GM12878 (cell line): ENCODE measurements at regions of chr1 and their contacts with region 1.

Region 1: GRCh38 chr1:119318466-119319309 is 49.9 kb upstream of the HAO2 start:
- DNase-seq: peak; percentile 82
- ATAC-seq: peak; percentile 84
- H3K4me3 ChIP-seq: peak overlapping the region; percentile 59
- H3K27ac ChIP-seq: peak overlapping the region; percentile 76
- H3K4me1 ChIP-seq: peaks cover 22% of the 10 kb centered on the region
- H3K27me3 ChIP-seq: no peaks in the 10 kb centered on the region
- CTCF ChIP-seq: peak in 1 of 3 experiments; percentile 3; a peak in 1 of 6 replicates
- EP300 ChIP-seq: peak in 1 of 2 experiments; percentile 66; a peak in 1 of 4 replicates
- POLR2A ChIP-seq: no peak
- RAD21 ChIP-seq: peak; percentile 4; the same call in 1 of the 2 replicates

Region 2: DNA sequence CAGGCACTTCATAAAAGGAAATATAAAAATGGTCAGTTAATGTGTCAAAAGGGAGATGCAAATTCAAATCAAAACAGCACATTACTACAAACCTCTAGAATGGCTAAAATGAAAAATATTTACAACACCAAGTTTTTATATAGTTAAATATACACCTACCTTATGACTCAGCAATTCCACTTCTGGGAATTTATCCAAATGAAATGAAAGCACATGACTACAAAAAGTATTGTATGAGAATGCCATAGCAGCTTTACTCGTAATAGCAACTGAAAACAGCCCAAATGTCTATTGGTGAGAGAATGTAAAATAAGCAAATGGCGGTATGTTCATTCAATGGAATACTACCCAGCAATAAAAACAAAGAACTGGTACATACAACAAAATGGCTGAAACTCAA is 957.9 kb before region 1 on chr1:
- CTCF ChIA-PET with region 1: no interaction called
- POLR2A ChIA-PET with region 1: no interaction called
- RAD21 ChIA-PET with region 1: no interaction called
- SMC1A ChIA-PET with region 1: no interaction called
- in situ Hi-C with region 1: no loop called
- intact Hi-C with region 1: no loop called
- DNase-seq: no peak
- ATAC-seq: no peak
- H3K4me3 ChIP-seq: no peak overlapping the region
- H3K27ac ChIP-seq: no peak overlapping the region
- H3K4me1 ChIP-seq: no peaks in the 10 kb centered on the region
- H3K27me3 ChIP-seq: no peaks in the 10 kb centered on the region
- CTCF ChIP-seq: no peak
- EP300 ChIP-seq: no peak
- POLR2A ChIP-seq: no peak
- RAD21 ChIP-seq: no peak

Region 3: GRCh38 chr1:119266386-119266785 is 52.3 kb before region 1 on chr1:
- CTCF ChIA-PET with region 1: interaction called, 4 read pairs
- POLR2A ChIA-PET with region 1: no interaction called
- RAD21 ChIA-PET with region 1: interaction called, 3 read pairs
- SMC1A ChIA-PET with region 1: interaction called, 3 read pairs
- in situ Hi-C with region 1: no loop called
- intact Hi-C with region 1: loop called (anchors 5 kb)
- DNase-seq: peak; percentile 70
- ATAC-seq: peak; percentile 95
- H3K4me3 ChIP-seq: no peak overlapping the region
- H3K27ac ChIP-seq: 0 out of 2 replicates have a peak overlapping the region, but pooled peaks have one; percentile 24
- H3K4me1 ChIP-seq: peaks cover 14% of the 10 kb centered on the region
- H3K27me3 ChIP-seq: no peaks in the 10 kb centered on the region
- CTCF ChIP-seq: no peak
- EP300 ChIP-seq: no peak
- POLR2A ChIP-seq: no peak
- RAD21 ChIP-seq: no peak

Region 4: DNA sequence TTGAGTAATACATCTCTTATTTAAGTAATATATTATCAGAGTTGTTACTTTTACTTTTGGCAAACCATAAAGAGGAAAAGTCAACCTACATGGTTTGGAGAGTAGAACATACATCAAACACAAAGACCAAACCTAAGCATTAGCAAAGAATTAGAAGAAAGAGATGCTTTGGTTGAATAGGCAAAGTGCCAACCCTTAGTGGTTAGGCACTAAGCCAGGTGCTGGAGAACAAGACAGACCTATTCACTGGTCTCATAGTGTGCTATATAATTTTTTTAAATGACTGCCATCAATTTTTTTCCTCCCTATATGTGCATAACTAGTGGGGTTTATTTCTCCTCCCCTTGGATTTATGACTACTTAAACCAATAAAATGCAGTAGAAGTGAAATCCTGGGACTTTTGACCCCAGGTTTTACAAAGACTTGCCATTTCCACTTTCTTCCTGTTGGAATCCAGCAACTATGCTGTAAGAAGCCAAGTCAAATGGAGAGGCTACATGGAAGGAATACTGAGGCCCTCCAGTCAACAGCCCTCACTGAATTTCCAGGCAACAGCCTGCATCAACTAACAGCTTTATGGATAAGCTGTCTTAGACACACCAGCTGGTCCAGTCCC is 19.9 kb before region 1 on chr1:
- CTCF ChIA-PET with region 1: interaction called, 11 read pairs
- POLR2A ChIA-PET with region 1: interaction called, 5 read pairs
- RAD21 ChIA-PET with region 1: interaction called, 18 read pairs
- SMC1A ChIA-PET with region 1: interaction called, 43 read pairs
- in situ Hi-C with region 1: no loop called
- intact Hi-C with region 1: no loop called
- DNase-seq: no peak
- ATAC-seq: peak; percentile 41
- H3K4me3 ChIP-seq: no peak overlapping the region
- H3K27ac ChIP-seq: no peak overlapping the region
- H3K4me1 ChIP-seq: no peaks in the 10 kb centered on the region
- H3K27me3 ChIP-seq: peaks cover 0 to 3% of the 10 kb centered on the region in 2 experiments; a peak in 1 of 4 replicates
- CTCF ChIP-seq: no peak
- EP300 ChIP-seq: no peak
- POLR2A ChIP-seq: no peak
- RAD21 ChIP-seq: no peak

Region 5: DNA sequence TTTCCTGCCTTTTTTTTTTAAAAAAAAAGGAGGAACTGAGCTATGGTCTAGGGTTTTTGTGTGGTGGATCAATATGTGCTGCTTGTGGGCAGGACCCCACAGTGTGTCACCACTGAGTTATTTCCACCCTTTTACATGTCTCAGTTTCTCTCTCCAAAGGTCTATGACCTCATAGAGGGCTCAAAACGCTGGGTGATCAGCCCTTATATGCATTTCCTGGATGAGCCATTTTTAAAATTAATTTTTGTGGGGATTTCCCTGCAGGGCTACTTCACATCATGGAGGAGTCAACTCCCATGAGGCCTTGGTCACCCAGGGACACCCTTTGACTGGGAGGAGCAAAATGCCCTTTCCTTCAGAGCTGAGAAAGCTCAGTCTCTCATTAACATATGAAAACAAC is 29.2 kb after region 1 on chr1:
- CTCF ChIA-PET with region 1: interaction called, 47 read pairs
- POLR2A ChIA-PET with region 1: interaction called, 7 read pairs
- RAD21 ChIA-PET with region 1: interaction called, 48 read pairs
- SMC1A ChIA-PET with region 1: interaction called, 108 read pairs
- in situ Hi-C with region 1: no loop called
- intact Hi-C with region 1: loop called (anchors 1 kb)
- DNase-seq: peak; percentile 77
- ATAC-seq: peak; percentile 96
- H3K4me3 ChIP-seq: no peak overlapping the region
- H3K27ac ChIP-seq: no peak overlapping the region
- H3K4me1 ChIP-seq: peaks cover 5% of the 10 kb centered on the region; the same call in 1 of the 2 replicates
- H3K27me3 ChIP-seq: no peaks in the 10 kb centered on the region
- CTCF ChIP-seq: no peak
- EP300 ChIP-seq: 0 out of 4 replicates have a peak, but pooled peaks of 1 of the 2 experiments have one; percentile 43
- POLR2A ChIP-seq: no peak
- RAD21 ChIP-seq: no peak

Region 6: DNA sequence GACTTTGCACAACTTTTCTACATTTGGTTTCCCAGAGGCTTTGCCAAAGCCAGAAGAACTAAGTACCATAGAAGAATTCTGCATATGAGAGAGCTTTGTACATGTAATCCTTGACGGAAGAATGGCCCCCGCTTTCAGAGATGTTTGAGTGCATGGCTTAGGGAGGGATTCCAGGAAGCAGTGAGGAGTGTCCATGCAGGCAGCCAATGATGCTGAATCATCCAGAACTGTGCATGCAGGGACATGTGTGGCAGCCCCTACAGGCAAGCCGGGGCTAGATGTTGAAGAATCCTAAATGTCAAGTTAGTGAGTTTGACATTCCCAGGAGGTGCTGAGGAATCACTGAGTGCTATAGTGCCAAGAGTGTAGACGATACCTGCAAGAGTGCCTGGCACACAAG is 39.9 kb after region 1 on chr1:
- CTCF ChIA-PET with region 1: interaction called, 10 read pairs
- POLR2A ChIA-PET with region 1: no interaction called
- RAD21 ChIA-PET with region 1: interaction called, 6 read pairs
- SMC1A ChIA-PET with region 1: interaction called, 8 read pairs
- in situ Hi-C with region 1: no loop called
- intact Hi-C with region 1: no loop called
- DNase-seq: no peak
- ATAC-seq: no peak
- H3K4me3 ChIP-seq: no peak overlapping the region
- H3K27ac ChIP-seq: no peak overlapping the region
- H3K4me1 ChIP-seq: peaks cover 7% of the 10 kb centered on the region; the same call in 1 of the 2 replicates
- H3K27me3 ChIP-seq: no peaks in the 10 kb centered on the region
- CTCF ChIP-seq: no peak
- EP300 ChIP-seq: no peak
- POLR2A ChIP-seq: no peak
- RAD21 ChIP-seq: no peak

Region 7: GRCh38 chr1:119603695-119604094 is 285.0 kb after region 1 on chr1:
- CTCF ChIA-PET with region 1: no interaction called
- POLR2A ChIA-PET with region 1: no interaction called
- RAD21 ChIA-PET with region 1: no interaction called
- SMC1A ChIA-PET with region 1: no interaction called
- in situ Hi-C with region 1: no loop called
- intact Hi-C with region 1: no loop called
- DNase-seq: no peak
- ATAC-seq: no peak
- H3K4me3 ChIP-seq: no peak overlapping the region
- H3K27ac ChIP-seq: no peak overlapping the region
- H3K4me1 ChIP-seq: no peaks in the 10 kb centered on the region
- H3K27me3 ChIP-seq: no peaks in the 10 kb centered on the region; a peak in 2 of 4 replicates
- CTCF ChIP-seq: no peak
- EP300 ChIP-seq: no peak
- POLR2A ChIP-seq: no peak
- RAD21 ChIP-seq: no peak